Colonic mucosa (tissue), 4 donors: ENCODE measurements at regions of chr2 and their contacts with region 1.

Region 1: DNA sequence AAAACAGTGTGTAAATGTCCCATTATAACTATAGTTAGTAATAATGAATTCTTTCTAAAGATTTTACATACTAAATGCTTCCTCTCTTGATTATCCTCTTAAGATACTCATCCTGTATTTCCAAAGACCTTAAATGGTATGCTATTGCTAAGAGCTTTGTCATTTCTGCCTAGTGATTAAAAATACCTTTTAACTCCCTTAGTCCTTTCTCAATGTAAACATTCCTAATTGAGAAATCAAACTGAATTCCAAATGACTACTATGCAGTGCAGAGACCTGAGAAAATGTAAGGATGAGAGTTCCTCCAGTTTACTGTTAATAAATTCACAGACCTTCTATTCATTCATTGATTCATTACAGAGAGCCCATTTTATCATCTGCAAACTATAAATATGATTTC is 86.9 kb downstream of the SOS1 start:
- DNase-seq: no peak
- H3K4me3 ChIP-seq: no peak overlapping the region
- H3K27ac ChIP-seq: no peak overlapping the region
- H3K4me1 ChIP-seq: no peaks in the 10 kb centered on the region
- H3K27me3 ChIP-seq: no peaks in the 10 kb centered on the region
- CTCF ChIP-seq: no peak

Region 2: GRCh38 chr2:38947240-38948239 is 86.4 kb before region 1 on chr2:
- intact Hi-C with region 1: loop called (anchors 10 kb)
- DNase-seq: peak; percentile 78
- H3K4me3 ChIP-seq: no peak overlapping the region
- H3K27ac ChIP-seq: no peak overlapping the region
- H3K4me1 ChIP-seq: no peaks in the 10 kb centered on the region
- H3K27me3 ChIP-seq: no peaks in the 10 kb centered on the region
- CTCF ChIP-seq: peak; percentile 45